ENCODE measurements at regions of chr12 and their contacts with region 1.

Region 1: DNA sequence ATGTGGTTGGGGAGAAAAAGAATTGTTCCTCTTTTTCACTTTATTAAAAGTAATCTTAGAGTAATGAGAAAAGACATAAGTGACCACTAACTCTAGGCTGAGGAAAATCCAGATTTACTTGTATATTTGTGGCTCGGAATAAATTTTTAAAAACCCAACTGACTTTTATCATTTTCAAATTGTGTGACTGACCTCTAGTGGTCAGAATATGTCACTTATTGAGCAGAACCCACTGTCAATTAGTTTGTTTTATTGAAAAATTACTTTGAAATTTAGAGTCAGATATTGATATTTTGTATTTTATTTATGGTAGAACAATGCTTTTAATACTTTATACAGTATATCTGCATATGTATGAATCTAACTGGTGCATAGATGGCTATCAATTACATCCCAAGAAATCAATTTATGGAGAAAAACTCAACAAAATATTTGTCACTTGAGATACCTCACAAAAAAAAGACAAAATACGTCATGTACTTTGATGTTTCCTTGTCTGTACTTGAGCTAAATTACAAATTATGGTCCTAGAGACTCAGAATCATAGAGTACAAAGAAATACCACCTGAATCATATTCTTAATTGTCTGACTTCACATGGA is 229.4 kb downstream of the CNTN1 start:
- DNase-seq: no peak
- H3K4me3 ChIP-seq: no peak overlapping the region
- H3K27ac ChIP-seq: no peak overlapping the region
- H3K4me1 ChIP-seq: no peaks in the 10 kb centered on the region
- H3K27me3 ChIP-seq: no peaks in the 10 kb centered on the region
- CTCF ChIP-seq: peak in 3 of 4 experiments; percentile 37 to 76 (median 50)
- EP300 ChIP-seq: no peak
- POLR2A ChIP-seq: no peak

Region 2: DNA sequence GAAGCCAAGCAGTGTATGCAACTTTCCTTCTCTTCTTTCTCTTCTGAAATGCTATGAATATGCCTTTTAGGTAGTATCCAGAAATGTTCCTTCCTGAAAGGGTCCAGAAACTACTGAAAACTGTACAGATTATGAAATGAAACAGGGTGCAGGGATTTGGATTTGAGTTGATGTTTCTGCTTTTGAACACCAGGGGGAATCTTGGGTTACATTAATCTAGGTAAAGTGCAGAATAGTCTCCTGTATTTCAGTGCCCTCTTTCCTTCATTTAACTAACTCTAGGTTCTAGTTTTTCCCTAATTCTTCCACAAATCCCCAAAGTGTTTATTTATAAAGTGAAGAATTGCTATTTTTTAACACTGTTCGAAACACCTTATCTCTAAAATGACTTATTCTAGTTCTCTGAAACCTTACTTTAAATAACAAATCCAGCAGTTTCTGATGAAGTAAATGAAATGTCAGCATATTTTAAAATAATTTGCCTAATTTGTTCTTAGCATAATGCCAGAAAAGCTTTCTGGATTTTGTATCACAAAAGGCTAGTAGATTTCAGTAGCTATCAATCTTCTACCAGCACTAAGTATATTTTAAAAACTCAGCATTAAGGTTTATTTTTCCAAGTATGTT is 585.0 kb before region 1 on chr12:
- intact Hi-C with region 1: loop called (anchors 5 kb)
- DNase-seq: no peak
- H3K4me3 ChIP-seq: no peak overlapping the region
- H3K27ac ChIP-seq: no peak overlapping the region
- H3K4me1 ChIP-seq: peaks cover 0 to 25% (median 11%) of the 10 kb centered on the region in 4 donors
- H3K27me3 ChIP-seq: no peaks in the 10 kb centered on the region
- CTCF ChIP-seq: peak in 3 of 4 experiments; percentile 15 to 43 (median 21)
- EP300 ChIP-seq: no peak
- POLR2A ChIP-seq: no peak

Region 3: GRCh38 chr12:40622246-40622838 is 299.3 kb before region 1 on chr12:
- intact Hi-C with region 1: loop called (anchors 1 kb)
- DNase-seq: no peak
- H3K4me3 ChIP-seq: no peak overlapping the region
- H3K27ac ChIP-seq: no peak overlapping the region
- H3K4me1 ChIP-seq: no peaks in the 10 kb centered on the region
- H3K27me3 ChIP-seq: no peaks in the 10 kb centered on the region
- CTCF ChIP-seq: peak; percentile 17 to 79 (median 54)
- EP300 ChIP-seq: no peak
- POLR2A ChIP-seq: no peak